Activated B cell treated with CpG ODN at 0.5 μM for 24 hours (primary cell): ENCODE measurements at regions of chr12 and their contacts with region 1.

Region 1: DNA sequence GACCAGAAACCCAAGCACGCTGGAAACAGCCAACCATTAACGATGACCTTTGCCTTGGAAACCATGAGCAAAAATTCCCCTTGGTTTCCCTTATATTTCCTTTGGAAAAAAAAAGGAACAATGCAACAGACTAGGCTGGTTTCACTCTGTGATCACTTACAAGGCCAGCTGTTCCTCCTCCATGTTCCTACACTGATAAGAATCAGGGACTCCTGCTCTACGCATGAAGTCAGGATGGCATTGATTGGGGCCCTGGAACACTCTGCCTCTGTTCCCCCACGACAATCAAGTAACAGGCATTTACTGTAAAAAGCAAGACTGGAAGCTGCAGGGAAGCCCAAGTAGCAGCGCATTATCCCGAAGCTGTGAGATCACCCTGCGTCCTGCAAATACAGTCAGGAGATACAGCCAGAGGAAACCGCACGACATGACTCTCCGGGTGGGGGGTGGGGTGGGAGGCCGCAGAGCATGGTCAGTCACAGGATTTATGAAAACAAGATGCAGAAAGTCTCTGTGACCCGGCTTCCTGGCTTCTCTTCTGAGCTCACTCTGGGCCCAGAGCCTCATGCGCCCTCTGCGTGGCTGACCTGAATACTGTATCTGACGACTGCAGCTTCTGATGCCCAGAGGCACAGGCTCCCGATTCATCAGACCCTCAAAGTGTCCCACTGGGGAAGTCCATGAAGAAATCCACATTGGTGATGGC is 31.1 kb downstream of the SSH1 start:
- DNase-seq: no peak
- ATAC-seq: peak; percentile 66
- H3K4me3 Mint-ChIP-seq: peak overlapping the region; percentile 44
- H3K27ac Mint-ChIP-seq: peak overlapping the region; percentile 66
- H3K4me1 Mint-ChIP-seq: peaks cover 48% of the 10 kb centered on the region
- H3K27me3 Mint-ChIP-seq: no peaks in the 10 kb centered on the region
- CTCF ChIP-seq: no peak

Region 2: GRCh38 chr12:108712165-108712924 is 113.9 kb before region 1 on chr12:
- CTCF ChIA-PET with region 1: no interaction called
- POLR2A ChIA-PET with region 1: no interaction called
- intact Hi-C with region 1: no loop called
- DNase-seq: no peak
- ATAC-seq: peak; percentile 73
- H3K4me3 Mint-ChIP-seq: peak overlapping the region; percentile 64
- H3K27ac Mint-ChIP-seq: peak overlapping the region; percentile 56
- H3K4me1 Mint-ChIP-seq: peaks cover 60% of the 10 kb centered on the region
- H3K27me3 Mint-ChIP-seq: no peaks in the 10 kb centered on the region
- CTCF ChIP-seq: no peak

Region 3: DNA sequence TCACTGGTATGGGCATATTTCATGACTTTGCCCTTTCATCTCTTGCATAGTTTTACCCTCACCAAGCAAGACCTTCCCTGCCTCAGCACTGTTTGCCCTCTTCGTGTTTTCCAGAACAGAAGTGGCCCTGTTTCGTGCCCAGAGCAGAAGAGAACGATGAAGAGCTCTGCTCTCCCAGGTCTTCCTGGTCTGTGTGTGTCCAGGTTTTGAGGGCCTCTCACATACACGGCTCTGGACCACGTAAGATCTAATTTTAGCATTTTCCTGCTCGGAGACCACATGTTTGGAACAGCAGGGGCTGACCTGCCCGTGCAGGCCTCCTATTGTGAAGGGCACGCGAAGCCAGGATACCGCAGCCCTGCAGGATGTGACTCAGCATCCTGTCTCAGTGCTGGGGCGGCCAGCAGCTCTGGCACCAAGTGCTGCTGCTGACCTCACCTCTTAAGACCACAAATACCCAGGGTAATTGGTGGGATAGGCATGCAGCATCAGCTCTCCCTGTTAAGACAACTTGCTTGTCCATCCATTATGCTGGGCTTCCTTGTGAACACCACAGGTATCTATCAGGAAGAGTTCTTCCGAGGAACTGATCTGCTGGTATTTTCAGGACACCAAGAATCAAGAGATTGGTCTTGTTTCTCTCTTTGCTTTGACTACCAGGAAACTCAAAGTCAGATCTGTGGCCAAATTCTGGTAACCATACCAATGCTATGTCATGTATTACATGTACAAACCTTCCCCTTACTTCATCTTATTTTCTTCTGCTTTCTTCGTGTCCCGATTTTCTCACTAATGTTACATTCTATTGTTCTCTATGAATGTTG is 12.2 kb after region 1 on chr12:
- CTCF ChIA-PET with region 1: no interaction called
- POLR2A ChIA-PET with region 1: interaction called, 3 read pairs
- intact Hi-C with region 1: loop called (anchors 2 kb)
- DNase-seq: no peak
- ATAC-seq: peak; percentile 95
- H3K4me3 Mint-ChIP-seq: peak overlapping the region; percentile 9
- H3K27ac Mint-ChIP-seq: peak overlapping the region; percentile 79
- H3K4me1 Mint-ChIP-seq: peaks cover 17% of the 10 kb centered on the region
- H3K27me3 Mint-ChIP-seq: no peaks in the 10 kb centered on the region
- CTCF ChIP-seq: no peak

Region 4: DNA sequence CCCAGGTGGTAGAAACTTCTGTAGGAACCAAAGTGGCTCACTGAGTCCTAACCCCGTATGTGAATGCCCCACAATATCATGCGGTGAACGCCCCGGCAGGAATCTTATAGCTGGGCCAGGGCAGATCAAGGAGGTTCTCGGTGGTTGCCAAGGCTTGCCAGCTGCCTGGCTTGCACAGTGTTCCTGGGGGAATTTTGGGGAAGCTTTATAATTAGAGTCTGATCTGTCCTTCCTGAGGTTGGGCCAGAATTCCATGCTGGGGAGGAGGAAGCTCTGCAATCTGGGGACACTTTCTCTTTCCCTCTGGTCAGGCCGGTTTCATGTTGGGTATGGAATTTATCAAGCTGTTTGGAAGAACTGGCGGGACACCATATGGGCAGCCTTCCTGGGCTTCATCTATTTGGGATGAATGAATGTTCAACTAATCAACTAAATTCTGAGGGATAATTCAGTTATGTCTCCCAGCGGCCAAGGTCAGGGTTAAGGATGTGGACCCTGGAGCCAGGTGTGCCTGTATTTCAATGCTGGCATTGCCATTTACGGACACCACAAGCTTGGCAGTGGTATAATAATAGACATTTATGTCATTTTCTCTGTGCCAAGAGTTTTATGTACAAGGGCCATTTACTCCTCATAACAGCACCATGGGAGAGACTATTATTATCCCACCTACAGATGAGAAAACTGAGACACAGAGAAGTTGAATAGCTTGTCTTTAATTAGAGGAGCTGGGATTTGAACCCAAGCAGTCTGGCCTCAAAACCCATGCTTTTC is 140.3 kb after region 1 on chr12:
- CTCF ChIA-PET with region 1: no interaction called
- POLR2A ChIA-PET with region 1: no interaction called
- intact Hi-C with region 1: no loop called
- DNase-seq: no peak
- ATAC-seq: no peak
- H3K4me3 Mint-ChIP-seq: no peak overlapping the region
- H3K27ac Mint-ChIP-seq: no peak overlapping the region
- H3K4me1 Mint-ChIP-seq: no peaks in the 10 kb centered on the region
- H3K27me3 Mint-ChIP-seq: peaks cover 24% of the 10 kb centered on the region
- CTCF ChIP-seq: no peak

Region 5: GRCh38 chr12:109147954-109148353 is 321.7 kb after region 1 on chr12:
- CTCF ChIA-PET with region 1: no interaction called
- POLR2A ChIA-PET with region 1: no interaction called
- intact Hi-C with region 1: no loop called
- DNase-seq: no peak
- ATAC-seq: no peak
- H3K4me3 Mint-ChIP-seq: no peak overlapping the region
- H3K27ac Mint-ChIP-seq: no peak overlapping the region
- H3K4me1 Mint-ChIP-seq: no peaks in the 10 kb centered on the region
- H3K27me3 Mint-ChIP-seq: peaks cover 17% of the 10 kb centered on the region
- CTCF ChIP-seq: no peak